ENCODE measurements at regions of chr3 and their contacts with region 1.

Region 1: GRCh38 chr3:4850928-4851265 is 128.3 kb upstream of the BHLHE40 start:
- DNase-seq: peak; percentile 87
- H3K4me3 Mint-ChIP-seq: peak overlapping the region; percentile 72
- H3K27ac Mint-ChIP-seq: peak overlapping the region; percentile 99
- H3K4me1 Mint-ChIP-seq: peaks cover 77% of the 10 kb centered on the region
- H3K27me3 Mint-ChIP-seq: no peaks in the 10 kb centered on the region

Region 2: GRCh38 chr3:4722103-4722502 is 128.8 kb before region 1 on chr3:
- intact Hi-C with region 1: loop called (anchors 2 kb)
- DNase-seq: peak; percentile 80
- H3K4me3 Mint-ChIP-seq: no peak overlapping the region
- H3K27ac Mint-ChIP-seq: peak overlapping the region; percentile 68
- H3K4me1 Mint-ChIP-seq: peaks cover 61% of the 10 kb centered on the region
- H3K27me3 Mint-ChIP-seq: no peaks in the 10 kb centered on the region

Region 3: DNA sequence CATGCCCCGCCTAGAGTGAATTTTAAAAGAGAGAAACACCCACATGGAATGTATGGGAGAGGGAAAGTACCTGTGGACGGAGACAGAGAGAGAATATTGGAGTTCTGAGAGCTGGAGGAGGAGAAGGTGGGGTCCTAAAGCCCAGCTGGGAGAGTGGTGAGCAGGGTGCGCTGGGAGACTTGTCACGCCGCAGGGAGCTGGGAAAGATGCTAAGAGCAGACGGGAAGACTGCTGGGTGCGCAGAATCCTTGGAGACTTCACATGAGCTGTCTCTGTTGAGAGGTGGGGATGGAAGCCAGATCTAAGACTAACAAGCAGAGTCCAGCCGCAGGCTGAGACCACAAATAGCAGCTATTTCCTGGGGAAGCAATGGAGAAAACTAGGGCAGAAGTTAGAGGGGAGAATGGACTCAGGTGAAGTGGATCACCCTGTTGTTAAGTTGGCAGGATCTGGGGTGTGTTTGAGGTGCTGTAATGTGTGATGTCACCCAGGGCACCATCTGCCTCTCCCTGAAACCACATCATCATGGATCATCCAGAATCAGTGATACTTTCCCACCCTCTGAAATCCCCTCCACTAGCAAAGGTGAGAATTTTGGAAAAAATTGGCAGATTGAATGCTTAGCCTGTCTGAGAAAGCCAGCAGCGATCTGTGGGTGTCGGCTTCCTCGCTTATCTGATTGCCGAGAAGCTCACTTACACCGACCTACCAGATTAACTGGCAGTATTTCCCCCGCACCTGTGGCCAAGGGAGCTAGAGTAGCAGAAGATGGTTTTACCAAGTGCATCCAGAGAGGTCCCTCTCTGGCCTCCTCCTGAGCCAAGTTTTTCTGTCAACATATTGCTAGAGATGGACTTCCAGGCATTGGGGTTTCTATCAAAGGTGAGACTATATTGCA is 46.5 kb before region 1 on chr3:
- intact Hi-C with region 1: loop called (anchors 1 kb)
- DNase-seq: peak; percentile 64
- H3K4me3 Mint-ChIP-seq: peak overlapping the region; percentile 30
- H3K27ac Mint-ChIP-seq: peak overlapping the region; percentile 50
- H3K4me1 Mint-ChIP-seq: peaks cover 53% of the 10 kb centered on the region
- H3K27me3 Mint-ChIP-seq: no peaks in the 10 kb centered on the region

Region 4: DNA sequence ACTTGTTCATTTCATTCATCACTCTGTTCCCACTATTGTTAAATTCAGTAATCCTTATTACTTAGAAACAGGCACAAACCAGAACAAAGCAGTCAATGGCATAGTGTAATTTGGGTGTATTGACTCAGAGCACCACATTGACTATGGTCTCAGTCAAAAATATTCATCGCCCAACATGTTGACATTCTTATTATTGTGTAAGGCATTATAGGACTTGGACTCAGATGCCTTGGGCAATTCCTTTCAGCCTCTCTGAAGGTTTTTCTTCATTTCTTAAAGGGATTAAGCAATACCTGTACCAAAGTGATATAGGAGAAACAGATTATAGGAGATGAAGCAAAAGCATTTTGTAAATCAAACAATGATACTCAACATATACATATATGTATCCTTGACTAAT is 13.6 kb after region 1 on chr3:
- intact Hi-C with region 1: loop called (anchors 1 kb)
- DNase-seq: no peak
- H3K4me3 Mint-ChIP-seq: no peak overlapping the region
- H3K27ac Mint-ChIP-seq: peak overlapping the region; percentile 57
- H3K4me1 Mint-ChIP-seq: peaks cover 36% of the 10 kb centered on the region
- H3K27me3 Mint-ChIP-seq: no peaks in the 10 kb centered on the region

Region 5: GRCh38 chr3:5026331-5027218 is 175.7 kb after region 1 on chr3:
- intact Hi-C with region 1: loop called (anchors 1 kb)
- DNase-seq: peak; percentile 90
- H3K4me3 Mint-ChIP-seq: peak overlapping the region; percentile 87
- H3K27ac Mint-ChIP-seq: peak overlapping the region; percentile 93
- H3K4me1 Mint-ChIP-seq: peaks cover 49% of the 10 kb centered on the region
- H3K27me3 Mint-ChIP-seq: no peaks in the 10 kb centered on the region

Measured in activated CD4-positive, alpha-beta T cell treated with anti-CD3 and anti-CD28 coated beads, Interleukin-2, amount 10 ng/mL, durations not matched to agents 24 days and 14 days (primary cell).